ENCODE measurements at regions of chr4 and their contacts with region 1.

Region 1: GRCh38 chr4:11894977-11895376 is 466.3 kb upstream of the HS3ST1 start:
- DNase-seq: no peak
- ATAC-seq: no peak
- H3K4me3 ChIP-seq: no peak overlapping the region
- H3K27ac ChIP-seq: no peak overlapping the region
- H3K4me1 ChIP-seq: no peaks in the 10 kb centered on the region
- H3K27me3 ChIP-seq: no peaks in the 10 kb centered on the region
- CTCF ChIP-seq: no peak
- POLR2A ChIP-seq: no peak

Region 2: DNA sequence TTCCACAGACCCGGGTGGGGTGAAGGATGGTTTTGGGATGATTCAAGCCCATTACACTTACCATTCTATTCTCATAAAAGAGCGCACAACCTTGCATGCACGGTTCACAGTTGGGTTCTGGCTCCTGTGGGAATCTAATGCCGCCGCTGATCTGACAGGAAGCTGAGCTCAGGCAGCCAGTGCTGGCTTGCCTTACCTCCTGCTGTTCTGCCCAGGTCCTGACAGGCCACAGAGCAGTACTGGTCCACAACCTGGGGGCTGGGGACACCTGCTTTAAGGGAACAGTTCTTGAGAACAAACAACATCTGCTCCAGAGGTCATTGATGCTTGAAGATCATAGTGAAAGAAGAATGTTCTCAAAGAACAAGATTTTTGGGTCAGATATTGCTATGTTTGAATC is 458.3 kb before region 1 on chr4:
- intact Hi-C with region 1: loop called in 1 of 10 experiments (anchors 5 kb)
- DNase-seq: no peak
- ATAC-seq: no peak
- H3K4me3 ChIP-seq: no peak overlapping the region
- H3K27ac ChIP-seq: no peak overlapping the region
- H3K4me1 ChIP-seq: peaks cover 0 to 29% (median 0%) of the 10 kb centered on the region in 12 donors
- H3K27me3 ChIP-seq: no peaks in the 10 kb centered on the region
- CTCF ChIP-seq: no peak
- POLR2A ChIP-seq: no peak

Region 3: GRCh38 chr4:11821772-11822430 is 73.1 kb before region 1 on chr4:
- intact Hi-C with region 1: loop called in 1 of 10 experiments (anchors 2 kb)
- DNase-seq: no peak
- ATAC-seq: no peak
- H3K4me3 ChIP-seq: no peak overlapping the region
- H3K27ac ChIP-seq: no peak overlapping the region
- H3K4me1 ChIP-seq: no peaks in the 10 kb centered on the region
- H3K27me3 ChIP-seq: no peaks in the 10 kb centered on the region
- CTCF ChIP-seq: no peak
- POLR2A ChIP-seq: no peak